Activated naive CD4-positive, alpha-beta T cell treated with anti-CD3 and anti-CD28 coated beads, Interleukin-2, amount 10 ng/mL, durations not matched to agents 7 days and 5 days (primary cell): ENCODE measurements at regions of chr5 and their contacts with region 1.

Region 1: GRCh38 chr5:149852641-149853330 is 91.8 kb downstream of the PDE6A start:
- DNase-seq: peak; percentile 60
- H3K4me3 Mint-ChIP-seq: no peak overlapping the region
- H3K27ac Mint-ChIP-seq: no peak overlapping the region
- H3K4me1 Mint-ChIP-seq: no peaks in the 10 kb centered on the region
- H3K27me3 Mint-ChIP-seq: no peaks in the 10 kb centered on the region

Region 2: GRCh38 chr5:149656576-149657182 is 196.1 kb before region 1 on chr5:
- CTCF ChIA-PET with region 1: interaction called, 10 read pairs
- DNase-seq: peak; percentile 54
- H3K4me3 Mint-ChIP-seq: no peak overlapping the region
- H3K27ac Mint-ChIP-seq: no peak overlapping the region
- H3K4me1 Mint-ChIP-seq: no peaks in the 10 kb centered on the region
- H3K27me3 Mint-ChIP-seq: peaks cover 12% of the 10 kb centered on the region

Region 3: DNA sequence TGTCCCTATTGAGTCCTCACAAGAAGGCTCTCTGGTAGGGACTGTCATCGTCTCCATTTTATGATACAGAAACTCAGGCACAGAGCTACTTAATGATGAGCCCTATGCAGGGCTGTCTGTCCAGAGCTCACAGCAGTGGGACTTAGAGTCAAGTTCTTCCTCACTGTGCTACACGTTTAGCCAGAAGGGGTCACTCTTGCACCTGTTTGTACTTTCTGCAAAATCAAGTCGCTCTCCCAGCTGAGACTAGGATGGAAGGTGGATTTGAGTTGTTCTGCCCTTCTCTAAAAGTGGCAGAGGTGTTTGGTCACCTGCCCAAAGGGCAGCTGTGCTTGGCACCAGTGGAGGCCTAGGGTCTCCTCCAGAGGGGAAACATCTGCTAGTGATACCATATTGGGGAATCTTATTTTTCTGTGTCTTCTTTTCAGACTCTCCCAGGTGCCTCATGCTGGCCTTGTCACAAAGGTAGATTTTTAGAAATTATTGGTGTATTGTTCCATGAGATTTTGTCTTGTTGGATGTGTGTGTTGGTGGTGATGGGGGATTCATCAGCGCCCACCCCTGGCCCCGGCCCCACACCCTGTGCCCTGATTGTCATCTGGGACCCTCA is 18.4 kb before region 1 on chr5:
- CTCF ChIA-PET with region 1: interaction called, 188 read pairs
- DNase-seq: peak; percentile 77
- H3K4me3 Mint-ChIP-seq: no peak overlapping the region
- H3K27ac Mint-ChIP-seq: no peak overlapping the region
- H3K4me1 Mint-ChIP-seq: no peaks in the 10 kb centered on the region
- H3K27me3 Mint-ChIP-seq: no peaks in the 10 kb centered on the region

Region 4: DNA sequence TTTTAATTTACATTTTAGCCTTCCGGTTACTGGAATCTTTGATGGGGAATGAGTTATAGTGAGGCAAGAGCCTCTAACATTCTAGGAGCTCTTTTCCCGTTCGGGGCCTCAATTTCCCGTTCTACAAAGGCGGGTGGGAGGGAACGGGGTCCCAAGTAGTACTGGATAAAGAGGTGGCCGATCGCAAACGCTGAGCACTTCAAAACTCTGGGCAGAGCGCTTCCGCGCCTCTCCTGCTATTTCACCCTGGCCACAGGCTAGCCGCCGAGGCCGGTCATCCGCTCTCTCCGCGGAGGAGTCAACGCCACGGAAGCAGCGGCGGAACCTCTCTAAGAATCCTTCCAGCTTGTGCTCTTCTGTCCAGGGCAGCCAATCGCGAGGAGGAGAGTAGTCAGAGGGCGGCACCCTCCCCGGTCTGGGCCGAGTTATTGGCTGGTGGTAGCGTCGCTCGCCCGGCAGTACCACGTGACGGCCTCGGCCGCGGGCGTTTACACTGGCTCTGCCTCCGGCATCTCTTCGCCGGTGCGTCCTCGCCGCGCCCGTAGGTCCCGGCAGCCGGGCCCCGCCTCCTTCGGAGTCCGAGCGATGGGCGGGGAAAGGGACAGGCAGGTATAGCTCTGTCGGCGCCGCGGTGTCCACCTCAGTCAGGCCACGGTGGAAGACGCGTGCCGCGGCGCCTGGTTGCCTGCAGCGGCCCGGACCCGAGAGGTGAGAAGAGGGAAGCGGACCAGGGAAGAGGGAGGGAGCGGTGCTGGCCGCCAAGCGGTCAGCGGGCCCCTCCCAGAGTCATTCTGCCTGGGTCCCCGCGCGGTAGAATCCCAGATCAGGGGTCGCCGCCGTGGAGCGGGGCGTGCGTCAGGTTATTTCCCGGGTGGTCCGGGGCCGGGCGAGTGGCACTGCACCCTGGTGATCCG is 107.7 kb after region 1 on chr5 and contains the start of gene SLC26A2:
- CTCF ChIA-PET with region 1: interaction called, 12 read pairs
- DNase-seq: peak; percentile 97
- H3K4me3 Mint-ChIP-seq: peak within 1 kb of the TSS; percentile 80
- H3K27ac Mint-ChIP-seq: peak within 1 kb of the TSS; percentile 95
- H3K4me1 Mint-ChIP-seq: peaks cover 32% of the 10 kb centered on the region
- H3K27me3 Mint-ChIP-seq: no peaks in the 10 kb centered on the region

Region 5: GRCh38 chr5:149990518-149991376 is 138.0 kb after region 1 on chr5:
- CTCF ChIA-PET with region 1: interaction called, 16 read pairs
- DNase-seq: peak; percentile 76
- H3K4me3 Mint-ChIP-seq: no peak overlapping the region
- H3K27ac Mint-ChIP-seq: no peak overlapping the region
- H3K4me1 Mint-ChIP-seq: no peaks in the 10 kb centered on the region
- H3K27me3 Mint-ChIP-seq: no peaks in the 10 kb centered on the region